Transverse colon (tissue), 4 donors: ENCODE measurements at regions of chr13 and their contacts with region 1.

Region 1: GRCh38 chr13:40666045-40666904 is at the start of gene FOXO1:
- DNase-seq: peak; percentile 91
- H3K4me3 ChIP-seq: peak within 1 kb of the TSS; percentile 86 to 98 (median 93)
- H3K27ac ChIP-seq: peak within 1 kb of the TSS; percentile 99 to 100 (median 100)
- H3K4me1 ChIP-seq: peaks cover 12 to 39% (median 28%) of the 10 kb centered on the region in 4 donors
- H3K27me3 ChIP-seq: no peaks in the 10 kb centered on the region
- CTCF ChIP-seq: no peak
- EP300 ChIP-seq: no peak
- POLR2A ChIP-seq: peak; percentile 73
- total RNA-seq, gene FOXO1: 19.1 to 48.9 (median 38.3) TPM

Region 2: GRCh38 chr13:40401911-40402776 is 264.1 kb before region 1 on chr13:
- in situ Hi-C with region 1: loop called in 1 of 4 experiments (anchors 25 kb)
- intact Hi-C with region 1: loop called (anchors 10 kb)
- DNase-seq: peak; percentile 96
- H3K4me3 ChIP-seq: no peak overlapping the region
- H3K27ac ChIP-seq: peak overlapping the region; percentile 74 to 81 (median 77)
- H3K4me1 ChIP-seq: peaks cover 14 to 38% (median 26%) of the 10 kb centered on the region in 4 donors
- H3K27me3 ChIP-seq: no peaks in the 10 kb centered on the region
- CTCF ChIP-seq: no peak
- EP300 ChIP-seq: no peak
- POLR2A ChIP-seq: no peak